MCF 10A (cell line): ENCODE measurements at regions of chr6 and their contacts with region 1.

Region 1: DNA sequence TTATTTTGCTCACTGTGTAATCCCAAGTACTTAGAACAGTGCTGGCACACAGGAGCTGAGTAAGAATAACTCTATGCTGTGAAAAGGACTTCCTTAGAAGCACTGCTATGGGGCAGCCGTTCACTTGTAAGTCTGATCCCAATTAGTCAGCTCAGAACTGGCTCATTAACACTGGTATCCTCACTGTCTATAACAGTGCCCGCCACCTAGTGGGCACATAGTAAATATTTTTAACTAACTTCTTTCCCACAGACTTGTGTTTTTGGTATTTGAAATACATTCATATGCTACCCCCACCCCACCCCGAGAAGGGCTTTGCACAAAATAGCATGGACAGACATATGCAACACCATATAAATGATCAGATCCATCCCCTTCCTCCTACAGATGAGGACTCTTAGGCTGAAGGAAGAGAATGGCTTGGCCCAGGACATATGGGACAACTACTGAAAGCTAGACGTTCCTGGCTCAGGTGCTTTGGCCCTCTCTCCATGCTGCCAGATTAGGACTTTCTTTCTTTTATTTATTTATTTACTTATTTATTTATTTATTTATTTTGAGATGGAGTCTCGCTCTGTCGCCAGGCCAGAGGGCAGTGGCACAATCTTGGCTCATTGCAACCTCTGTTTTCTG is 47.1 kb downstream of the DST start:
- DNase-seq: peak; percentile 64
- H3K4me3 Mint-ChIP-seq: no peak overlapping the region
- H3K27ac Mint-ChIP-seq: no peak overlapping the region
- H3K4me1 Mint-ChIP-seq: peaks cover 6% of the 10 kb centered on the region
- H3K27me3 Mint-ChIP-seq: no peaks in the 10 kb centered on the region
- CTCF ChIP-seq: peak; percentile 37

Region 2: GRCh38 chr6:55974688-55975087 is 620.9 kb before region 1 on chr6:
- CTCF ChIA-PET with region 1: no interaction called
- POLR2A ChIA-PET with region 1: no interaction called
- intact Hi-C with region 1: loop called (anchors 10 kb)
- DNase-seq: no peak
- H3K4me3 Mint-ChIP-seq: no peak overlapping the region
- H3K27ac Mint-ChIP-seq: no peak overlapping the region
- H3K4me1 Mint-ChIP-seq: no peaks in the 10 kb centered on the region
- H3K27me3 Mint-ChIP-seq: no peaks in the 10 kb centered on the region
- CTCF ChIP-seq: no peak

Region 3: GRCh38 chr6:56278171-56278591 is 317.4 kb before region 1 on chr6:
- CTCF ChIA-PET with region 1: no interaction called
- POLR2A ChIA-PET with region 1: no interaction called
- intact Hi-C with region 1: no loop called
- DNase-seq: no peak
- H3K4me3 Mint-ChIP-seq: no peak overlapping the region
- H3K27ac Mint-ChIP-seq: no peak overlapping the region
- H3K4me1 Mint-ChIP-seq: no peaks in the 10 kb centered on the region
- H3K27me3 Mint-ChIP-seq: no peaks in the 10 kb centered on the region
- CTCF ChIP-seq: no peak

Region 4: DNA sequence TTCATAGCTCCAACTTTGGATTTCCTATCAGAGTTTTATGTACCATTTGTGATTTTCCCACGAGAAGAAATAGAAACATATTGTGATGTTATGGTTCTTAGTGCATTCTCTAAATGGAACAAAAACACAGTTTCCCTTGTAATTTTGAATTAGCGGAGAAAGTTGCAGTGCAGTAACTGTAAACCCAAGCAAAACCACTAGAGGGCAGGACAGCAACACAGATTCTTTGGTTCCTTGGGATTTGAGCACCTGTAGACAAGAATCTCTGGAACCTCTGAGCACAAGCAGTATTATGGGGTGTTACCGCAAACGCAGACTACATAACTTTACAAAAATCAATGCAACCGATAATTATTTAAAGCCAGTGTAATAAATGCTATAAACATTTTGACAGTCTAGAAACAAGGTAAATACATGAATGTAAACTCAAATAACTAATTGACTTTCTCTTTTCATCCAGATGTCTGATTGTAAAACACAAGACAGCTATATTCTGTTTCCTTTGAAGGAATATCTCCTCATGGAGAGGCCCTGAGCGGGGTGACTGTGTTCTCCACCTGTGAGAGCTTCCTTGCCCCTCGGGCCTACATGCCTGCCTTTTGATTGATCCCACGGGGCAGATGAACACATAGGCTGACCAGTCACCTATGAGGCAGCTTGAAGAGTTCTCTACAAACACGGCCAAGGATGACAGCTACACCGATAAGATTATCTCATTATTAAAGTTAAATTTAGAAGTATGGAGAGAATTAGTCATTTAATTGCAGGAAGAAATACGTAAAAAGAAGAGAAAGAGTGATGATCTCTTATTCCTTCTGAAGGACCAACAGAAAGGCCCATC is 280.7 kb before region 1 on chr6:
- CTCF ChIA-PET with region 1: interaction called, 4 read pairs
- POLR2A ChIA-PET with region 1: no interaction called
- intact Hi-C with region 1: loop called (anchors 1 kb)
- DNase-seq: peak; percentile 65
- H3K4me3 Mint-ChIP-seq: no peak overlapping the region
- H3K27ac Mint-ChIP-seq: no peak overlapping the region
- H3K4me1 Mint-ChIP-seq: no peaks in the 10 kb centered on the region
- H3K27me3 Mint-ChIP-seq: no peaks in the 10 kb centered on the region
- CTCF ChIP-seq: peak; percentile 87

Region 5: DNA sequence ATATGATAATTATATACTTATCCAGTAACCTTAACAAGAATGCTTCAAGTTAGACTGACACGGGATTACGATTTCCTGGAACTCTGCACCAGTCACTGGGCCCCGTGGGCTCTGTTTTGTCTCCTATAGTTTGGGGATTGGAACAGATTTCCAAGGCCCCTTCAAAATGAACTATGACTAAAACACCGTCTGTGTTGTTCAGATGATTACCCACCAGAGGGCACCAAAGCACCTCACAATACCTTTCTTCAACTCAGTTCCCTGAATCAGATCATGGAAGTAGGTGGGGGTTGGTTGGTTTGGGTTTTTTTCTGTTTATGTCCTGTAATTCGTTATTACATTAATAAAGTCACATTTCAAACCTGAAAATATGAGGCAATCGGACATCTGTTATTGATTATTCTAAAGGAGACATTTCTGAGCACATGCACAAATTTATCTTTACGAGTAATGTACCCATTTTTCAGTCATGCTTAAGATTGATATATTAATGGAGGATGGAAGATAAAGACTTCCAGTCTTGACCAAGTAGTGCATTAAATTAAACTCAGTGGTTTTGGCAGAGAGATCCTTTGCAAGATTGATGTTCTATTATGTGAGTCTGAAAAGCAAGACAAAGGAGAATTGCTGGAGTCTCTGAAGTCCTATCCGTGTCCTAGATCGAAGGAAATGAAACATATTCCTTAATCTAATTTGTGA is 236.3 kb before region 1 on chr6:
- CTCF ChIA-PET with region 1: interaction called, 5 read pairs
- POLR2A ChIA-PET with region 1: no interaction called
- intact Hi-C with region 1: loop called (anchors 1 kb)
- DNase-seq: peak; percentile 76
- H3K4me3 Mint-ChIP-seq: no peak overlapping the region
- H3K27ac Mint-ChIP-seq: no peak overlapping the region
- H3K4me1 Mint-ChIP-seq: peaks cover 4% of the 10 kb centered on the region
- H3K27me3 Mint-ChIP-seq: no peaks in the 10 kb centered on the region
- CTCF ChIP-seq: peak; percentile 81

Region 6: DNA sequence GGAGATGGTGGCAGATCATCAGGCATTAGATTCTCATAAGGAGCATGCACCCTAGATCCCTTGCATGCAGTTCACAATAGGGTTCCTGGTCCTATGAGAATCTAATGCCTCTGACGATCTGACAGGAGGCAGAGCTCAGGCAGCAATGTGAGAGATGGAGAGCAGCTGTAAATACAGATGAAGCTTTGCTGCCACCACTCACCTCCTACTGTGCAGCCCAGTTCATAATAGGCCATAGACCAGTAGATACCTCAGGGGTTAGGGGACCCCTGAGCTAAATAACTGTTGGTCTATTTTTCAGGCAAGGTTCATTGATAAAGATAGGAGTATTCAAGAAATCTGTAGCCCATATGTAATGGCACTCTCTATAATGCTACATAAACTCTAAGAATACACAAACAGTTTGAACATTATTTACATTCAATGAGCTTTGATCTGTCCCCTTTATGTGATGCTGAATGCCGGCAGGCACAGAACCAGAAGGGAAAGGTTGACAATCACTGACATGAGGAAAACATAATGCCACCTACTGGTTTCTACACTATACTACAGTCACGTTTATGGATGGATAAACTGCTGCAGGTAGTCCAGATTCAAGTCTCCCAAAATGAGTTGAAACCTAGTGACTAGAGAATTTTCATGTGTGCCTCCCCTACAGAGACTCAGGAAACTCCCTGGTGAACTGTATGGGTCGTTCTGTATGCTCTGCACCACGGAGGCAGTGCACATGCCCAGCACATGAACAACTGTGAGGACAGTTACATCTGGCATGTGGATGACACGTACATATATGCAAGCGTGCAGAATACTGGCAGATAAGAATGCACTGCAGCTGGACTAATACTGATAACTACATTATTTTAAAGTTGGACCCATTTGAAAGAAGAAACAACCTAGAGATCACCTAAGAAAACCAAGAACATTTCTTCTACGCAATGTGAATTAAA is 24.9 kb before region 1 on chr6:
- CTCF ChIA-PET with region 1: interaction called, 16 read pairs
- POLR2A ChIA-PET with region 1: no interaction called
- intact Hi-C with region 1: no loop called
- DNase-seq: peak; percentile 46
- H3K4me3 Mint-ChIP-seq: no peak overlapping the region
- H3K27ac Mint-ChIP-seq: no peak overlapping the region
- H3K4me1 Mint-ChIP-seq: no peaks in the 10 kb centered on the region
- H3K27me3 Mint-ChIP-seq: no peaks in the 10 kb centered on the region
- CTCF ChIP-seq: peak; percentile 68

Region 7: GRCh38 chr6:56575736-56576135 is 19.9 kb before region 1 on chr6:
- CTCF ChIA-PET with region 1: interaction called, 16 read pairs
- POLR2A ChIA-PET with region 1: interaction called, 4 read pairs
- intact Hi-C with region 1: no loop called
- DNase-seq: no peak
- H3K4me3 Mint-ChIP-seq: no peak overlapping the region
- H3K27ac Mint-ChIP-seq: no peak overlapping the region
- H3K4me1 Mint-ChIP-seq: no peaks in the 10 kb centered on the region
- H3K27me3 Mint-ChIP-seq: no peaks in the 10 kb centered on the region
- CTCF ChIP-seq: no peak

Region 8: DNA sequence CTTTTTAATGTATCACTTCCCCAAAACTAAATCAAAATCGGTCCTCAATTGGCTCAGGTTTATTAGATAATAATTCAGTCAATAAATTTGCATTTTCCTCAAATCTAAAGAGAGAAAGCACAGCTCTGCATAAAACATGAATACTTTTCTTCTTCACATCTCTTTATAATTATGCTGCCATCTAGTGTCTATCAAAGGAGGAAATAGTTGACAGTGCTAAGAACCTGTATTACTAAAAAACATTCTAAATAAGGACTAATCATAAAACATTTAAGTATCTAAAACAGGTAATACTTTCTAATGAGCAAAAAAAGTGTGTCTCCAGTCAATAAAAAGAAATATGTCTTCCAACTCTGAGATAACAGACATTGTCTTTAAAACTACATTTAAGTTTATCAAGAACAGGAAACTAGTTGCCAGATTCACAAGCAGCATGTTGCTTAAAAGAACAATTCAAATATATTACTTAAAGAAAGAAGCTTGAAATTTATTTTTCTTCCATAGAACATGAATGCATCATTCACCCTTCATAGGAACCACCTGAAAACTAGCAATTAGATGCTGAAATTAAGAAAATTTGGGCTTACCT is 103.6 kb after region 1 on chr6:
- CTCF ChIA-PET with region 1: interaction called, 10 read pairs
- POLR2A ChIA-PET with region 1: interaction called, 3 read pairs
- intact Hi-C with region 1: no loop called
- DNase-seq: peak; percentile 46
- H3K4me3 Mint-ChIP-seq: no peak overlapping the region
- H3K27ac Mint-ChIP-seq: no peak overlapping the region
- H3K4me1 Mint-ChIP-seq: peaks cover 16% of the 10 kb centered on the region
- H3K27me3 Mint-ChIP-seq: no peaks in the 10 kb centered on the region
- CTCF ChIP-seq: peak; percentile 37